Dorsolateral prefrontal cortex (tissue), 120 donors: ENCODE measurements at regions of chr4 and their contacts with region 1.

Region 1: DNA sequence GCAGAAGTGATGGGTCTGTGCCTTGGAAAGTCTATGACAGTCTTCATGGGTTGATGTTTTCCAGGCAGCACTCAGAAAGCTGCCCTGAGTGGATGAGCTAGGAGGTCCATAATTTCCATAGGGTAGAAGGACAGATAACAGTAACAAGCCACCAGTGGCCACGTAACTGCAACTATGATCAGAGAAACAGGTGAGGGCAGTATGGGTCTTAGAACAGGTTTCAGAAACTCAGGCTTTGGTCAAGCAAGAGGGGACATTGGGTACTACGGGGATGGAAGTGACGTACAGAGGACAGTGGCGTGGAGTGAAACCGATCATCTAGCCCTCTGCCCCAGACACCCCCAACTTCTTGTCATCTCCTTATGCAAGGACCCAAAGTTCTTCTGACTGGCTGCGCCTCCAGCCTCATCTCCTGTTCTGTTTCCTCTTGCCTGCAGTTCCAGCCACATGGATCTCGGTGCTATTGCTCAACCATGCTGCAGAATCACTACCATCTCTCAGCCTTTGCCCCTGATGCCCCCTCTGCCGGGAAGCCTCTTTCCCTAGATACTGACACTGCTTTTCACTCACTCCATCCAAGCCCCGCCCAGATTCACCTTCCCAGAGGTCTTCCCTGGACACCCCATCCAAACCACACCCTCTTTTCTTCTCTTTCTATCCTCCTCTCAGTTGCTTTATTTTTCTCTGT is 123.4 kb downstream of the MFAP3L start:
- DNase-seq: peak in 1 of 10 donors; percentile 31
- H3K4me3 ChIP-seq: no peak overlapping the region
- H3K27ac ChIP-seq: peak overlapping the region in 2 of 59 donors; percentile 1 to 14
- H3K27me3 ChIP-seq: no peaks in the 10 kb centered on the region
- CTCF ChIP-seq: peak in 40 of 56 donors; percentile 9 to 63 (median 36)

Region 2: DNA sequence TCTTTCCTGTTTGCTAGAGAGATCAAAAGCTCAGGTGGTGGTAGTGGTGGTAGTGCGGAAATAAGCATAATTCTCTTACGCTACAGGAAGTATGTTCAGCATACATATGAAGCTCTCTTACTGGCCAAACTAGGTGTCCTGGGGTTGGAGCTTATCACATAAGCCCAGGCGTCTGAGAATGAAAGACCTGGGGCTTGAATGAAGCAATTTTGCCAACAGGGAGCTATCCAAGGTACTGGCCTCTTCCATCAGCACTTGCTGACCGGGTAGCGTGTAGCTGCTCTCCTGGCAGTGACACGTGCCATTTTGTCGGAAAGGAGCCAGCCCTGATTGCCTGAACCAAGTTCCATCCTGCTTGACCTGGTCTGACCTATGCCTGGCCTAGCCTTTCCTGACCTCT is 79.1 kb before region 1 on chr4:
- intact Hi-C with region 1: loop called in 1 of 2 experiments (anchors 10 kb)
- DNase-seq: no peak
- H3K4me3 ChIP-seq: no peak overlapping the region
- H3K27ac ChIP-seq: no peak overlapping the region
- H3K27me3 ChIP-seq: no peaks in the 10 kb centered on the region
- CTCF ChIP-seq: no peak

Region 3: DNA sequence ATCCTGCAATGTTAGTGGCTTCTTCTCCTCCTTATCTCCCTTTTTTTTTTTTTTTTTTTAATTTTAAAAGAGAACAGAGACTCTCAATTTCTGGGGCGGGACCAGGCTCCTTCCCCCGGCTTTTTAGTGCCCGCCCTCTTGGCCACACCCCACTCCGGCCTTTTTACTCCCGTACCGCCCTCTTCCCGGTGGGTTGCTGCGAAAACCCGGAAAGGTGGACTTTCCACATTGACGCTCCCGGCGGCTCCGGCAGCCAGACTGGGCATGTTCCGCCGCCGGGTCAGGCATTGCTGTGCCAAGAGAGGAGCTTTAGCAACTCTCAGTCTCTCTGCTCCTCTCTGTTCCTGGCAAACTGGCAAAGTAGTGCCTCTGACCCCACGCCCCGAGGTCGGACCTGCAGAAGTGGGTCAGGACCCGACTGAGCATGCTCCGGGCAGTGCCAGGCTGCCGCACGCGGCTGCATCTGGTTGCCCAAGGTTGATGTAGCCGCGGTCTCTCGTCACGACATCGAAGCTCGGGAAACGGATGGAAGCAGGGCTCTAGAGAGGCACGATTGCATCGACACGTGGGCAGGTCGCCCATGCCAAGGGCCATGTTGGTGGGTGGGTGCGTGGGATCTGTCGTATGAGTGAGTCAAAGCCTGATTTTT is 124.5 kb after region 1 on chr4:
- intact Hi-C with region 1: loop called (anchors 5 kb)
- DNase-seq: peak; percentile 86 to 94 (median 91)
- H3K4me3 ChIP-seq: peak overlapping the region; percentile 66 to 96 (median 88)
- H3K27ac ChIP-seq: peak overlapping the region; percentile 60 to 99 (median 97)
- H3K27me3 ChIP-seq: no peaks in the 10 kb centered on the region
- CTCF ChIP-seq: peak in 22 of 56 donors; percentile 8 to 55 (median 33)

Region 4: GRCh38 chr4:170047771-170048354 is 145.1 kb after region 1 on chr4:
- intact Hi-C with region 1: loop called in 1 of 2 experiments (anchors 2 kb)
- DNase-seq: peak in 6 of 10 donors; percentile 41 to 78 (median 56)
- H3K4me3 ChIP-seq: no peak overlapping the region
- H3K27ac ChIP-seq: no peak overlapping the region
- H3K27me3 ChIP-seq: no peaks in the 10 kb centered on the region
- CTCF ChIP-seq: peak; percentile 70 to 98 (median 90)